A549 (cell line): ENCODE measurements at regions of chr15 and their contacts with region 1.

Region 1: GRCh38 chr15:64825431-64826294 is at the start of gene PIF1:
- DNase-seq: peak; percentile 98 to 99
- ATAC-seq: peak; percentile 99
- H3K4me3 ChIP-seq: peak within 1 kb of the TSS; percentile 61
- H3K27ac ChIP-seq: peak within 1 kb of the TSS; percentile 74 to 91
- H3K4me1 ChIP-seq: peaks cover 9% of the 10 kb centered on the region
- CTCF ChIP-seq: no peak
- EP300 ChIP-seq: no peak
- POLR2A ChIP-seq: peak; percentile 84
- RAD21 ChIP-seq: no peak
- polyA plus RNA-seq, gene PIF1: 8.5 and 11.1 TPM in 2 replicates

Region 2: DNA sequence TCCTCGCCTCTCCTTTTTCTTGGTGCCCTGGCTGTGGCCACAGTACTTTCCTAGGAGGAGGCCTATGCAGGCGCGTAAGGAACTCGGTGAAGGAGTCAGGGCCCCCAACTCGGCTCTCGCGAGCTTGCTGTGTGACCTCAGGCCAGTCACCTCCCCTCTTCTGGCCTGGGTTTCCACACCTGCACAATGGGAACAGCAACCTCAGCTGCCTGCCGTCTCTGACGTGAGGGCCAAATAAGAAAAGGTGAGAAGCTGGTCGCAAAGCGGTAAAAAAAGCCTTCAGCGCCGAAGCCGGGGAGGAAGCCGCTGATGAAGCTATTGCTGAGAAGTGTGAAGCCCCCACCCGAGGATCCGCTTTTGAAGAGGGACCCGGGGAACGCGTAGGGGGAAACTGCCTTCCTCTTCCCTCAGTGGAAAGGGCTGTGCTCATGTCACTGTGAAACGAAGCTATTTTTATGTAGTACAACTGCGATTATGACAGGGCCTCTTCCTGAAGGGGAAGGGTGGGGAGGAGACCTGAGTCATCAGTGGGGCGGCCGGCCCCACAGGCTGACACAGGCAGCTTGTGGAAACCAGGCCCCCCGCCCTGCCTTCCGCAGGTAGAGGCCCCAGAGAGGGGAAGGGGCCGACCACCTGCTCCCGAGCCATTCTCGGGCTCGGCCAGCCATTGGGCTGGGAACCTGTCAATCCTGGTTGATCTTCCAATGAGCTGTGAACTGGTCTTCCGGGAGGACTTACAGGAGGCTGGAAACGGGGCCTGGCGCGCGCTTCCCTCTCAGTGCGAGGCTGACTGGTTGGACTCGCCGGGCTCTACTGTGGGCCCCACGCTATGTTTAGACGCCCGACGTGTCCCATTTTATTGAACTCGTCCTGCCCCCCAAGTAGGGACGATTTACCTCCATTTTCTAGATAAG is 68.1 kb after region 1 on chr15:
- CTCF ChIA-PET with region 1: no interaction called
- POLR2A ChIA-PET with region 1: no interaction called
- DNase-seq: peak in 1 of 2 experiments; percentile 62
- ATAC-seq: peak in 1 of 2 experiments; percentile 31; a peak in 3 of 6 replicates
- H3K4me3 ChIP-seq: no peak overlapping the region
- H3K27ac ChIP-seq: no peak overlapping the region
- H3K4me1 ChIP-seq: peaks cover 10% of the 10 kb centered on the region; the same call in 2 of the 3 replicates
- CTCF ChIP-seq: no peak
- EP300 ChIP-seq: no peak
- POLR2A ChIP-seq: no peak
- RAD21 ChIP-seq: no peak

Region 3: GRCh38 chr15:64981812-64982450 is 156.3 kb after region 1 on chr15:
- CTCF ChIA-PET with region 1: no interaction called
- POLR2A ChIA-PET with region 1: interaction called, 12 read pairs
- DNase-seq: no peak
- ATAC-seq: no peak
- H3K4me3 ChIP-seq: no peak overlapping the region
- H3K27ac ChIP-seq: no peak overlapping the region
- H3K4me1 ChIP-seq: peaks cover 12% of the 10 kb centered on the region
- CTCF ChIP-seq: no peak
- EP300 ChIP-seq: no peak
- POLR2A ChIP-seq: no peak
- RAD21 ChIP-seq: no peak